ENCODE measurements at regions of chr17 and their contacts with region 1.

Region 1: GRCh38 chr17:41801374-41802271 is 10.1 kb downstream of the P3H4 start:
- DNase-seq: peak; percentile 74
- H3K4me3 ChIP-seq: no peak overlapping the region
- CTCF ChIP-seq: peak; percentile 94

Region 2: DNA sequence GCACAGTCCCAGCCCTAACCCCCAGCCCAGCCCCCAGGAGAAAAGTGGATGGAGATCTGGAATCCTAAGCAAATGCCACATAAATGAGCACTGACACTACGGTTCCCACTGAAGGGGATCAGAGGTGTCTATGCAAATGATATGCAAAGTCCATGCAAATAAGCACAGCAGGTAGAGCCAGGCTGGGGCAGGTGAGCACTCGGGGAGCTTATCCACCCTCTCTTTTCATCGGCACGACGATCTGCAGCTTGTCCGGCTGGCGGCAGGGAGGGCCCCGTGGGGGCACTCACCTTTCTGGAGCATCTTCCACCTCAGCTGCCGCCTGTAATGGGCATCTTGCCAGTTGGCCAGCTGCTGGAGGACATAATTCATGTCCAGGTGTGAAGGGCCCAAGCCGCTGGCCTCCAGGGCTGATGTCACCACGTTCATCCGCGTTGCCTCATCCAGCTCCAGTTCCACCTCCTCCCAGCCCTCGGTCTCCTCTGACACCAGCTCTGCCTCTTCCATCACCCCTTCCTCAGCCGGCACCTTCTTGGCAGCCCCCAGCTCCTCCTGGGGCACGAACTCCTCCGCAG is 77.1 kb before region 1 on chr17:
- in situ Hi-C with region 1: loop called (anchors 10 kb)
- DNase-seq: no peak
- H3K4me3 ChIP-seq: no peak overlapping the region
- CTCF ChIP-seq: no peak

Region 3: GRCh38 chr17:41738077-41738735 is 63.4 kb before region 1 on chr17:
- in situ Hi-C with region 1: no loop called
- DNase-seq: peak; percentile 78
- H3K4me3 ChIP-seq: no peak overlapping the region
- CTCF ChIP-seq: peak; percentile 97

Region 4: DNA sequence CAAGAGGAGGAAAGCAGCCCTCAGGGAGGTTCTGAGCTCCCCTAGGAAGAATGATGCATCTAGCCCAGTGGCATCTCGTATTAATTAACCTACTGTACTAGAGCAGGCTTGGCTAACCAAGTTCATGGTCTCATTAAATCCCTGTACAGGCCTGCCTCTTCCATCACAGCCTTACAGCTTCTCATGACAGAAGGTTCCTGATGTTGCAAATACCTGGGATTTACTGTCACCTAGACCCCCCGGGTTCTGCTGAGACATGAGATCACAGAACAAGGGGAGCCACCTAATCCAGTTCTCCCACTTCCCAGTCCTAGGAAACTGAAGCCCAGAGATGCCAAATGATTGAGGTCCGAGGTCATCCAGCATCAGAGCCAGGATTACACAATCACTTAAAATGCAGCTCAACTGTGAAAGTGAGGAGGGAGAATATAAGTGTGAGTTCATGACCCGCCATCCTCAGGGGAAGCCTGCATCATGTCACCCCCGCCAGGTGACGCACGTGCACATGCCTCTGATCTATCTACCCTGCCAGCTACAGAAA is 93.2 kb after region 1 on chr17:
- in situ Hi-C with region 1: no loop called
- DNase-seq: peak; percentile 88
- H3K4me3 ChIP-seq: no peak overlapping the region
- CTCF ChIP-seq: no peak